ENCODE measurements at regions of chr1 and their contacts with region 1.

Region 1: DNA sequence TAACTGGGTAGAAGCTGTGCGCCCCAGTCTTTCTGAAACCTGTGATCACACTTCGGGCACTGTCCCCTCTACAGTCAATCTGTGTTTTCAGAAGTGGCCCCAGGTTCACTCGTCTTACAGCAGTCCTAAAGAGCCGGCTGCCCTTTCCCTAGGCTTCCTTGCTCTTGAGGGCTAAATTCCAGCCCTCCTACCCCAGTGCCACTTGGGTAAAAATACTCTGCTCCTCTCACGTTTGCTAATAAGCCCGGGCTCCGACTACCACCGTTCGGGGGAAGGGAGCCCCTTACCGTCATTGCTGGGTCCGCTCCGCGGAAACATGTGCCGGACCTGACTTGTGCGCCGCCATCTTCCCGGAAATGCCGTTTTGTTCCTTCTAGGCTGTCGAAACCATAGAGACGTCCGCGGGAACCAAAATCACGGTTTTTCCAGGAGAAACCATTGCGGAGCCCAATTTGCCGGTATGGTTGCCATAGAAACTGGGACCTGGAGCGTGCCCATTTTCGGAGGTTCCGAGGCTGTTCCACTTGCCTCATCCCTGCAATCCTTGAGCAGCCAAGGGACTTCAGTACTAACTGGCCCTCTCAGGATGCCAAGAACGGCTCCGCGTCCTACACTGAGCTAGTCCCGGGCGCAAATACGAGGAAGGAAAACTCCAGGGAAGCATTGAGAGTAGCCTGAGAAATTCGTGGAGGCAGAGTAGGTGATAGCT is at the start of gene GPATCH4:
- DNase-seq: peak; percentile 59 to 84
- ATAC-seq: peak; percentile 78 to 92 (median 87)
- H3K4me3 ChIP-seq: peak within 1 kb of the TSS; percentile 34 to 85 (median 70)
- H3K27ac ChIP-seq: peak within 1 kb of the TSS in 9 of 10 donors; percentile 57 to 84 (median 80)
- H3K4me1 ChIP-seq: peaks cover 7 to 25% (median 15%) of the 10 kb centered on the region in 9 donors
- H3K27me3 ChIP-seq: no peaks in the 10 kb centered on the region
- CTCF ChIP-seq: no peak
- total RNA-seq, gene GPATCH4: 9.3 to 25.4 (median 13.3) TPM

Region 2: GRCh38 chr1:156465747-156466365 is 135.4 kb before region 1 on chr1:
- intact Hi-C with region 1: loop called in 2 of 10 experiments (anchors 5 kb)
- DNase-seq: no peak
- ATAC-seq: peak in 6 of 8 donors; percentile 3 to 31 (median 8)
- H3K4me3 ChIP-seq: no peak overlapping the region
- H3K27ac ChIP-seq: peak overlapping the region; percentile 20 to 81 (median 59)
- H3K4me1 ChIP-seq: peaks cover 28 to 87% (median 56%) of the 10 kb centered on the region in 9 donors
- H3K27me3 ChIP-seq: no peaks in the 10 kb centered on the region
- CTCF ChIP-seq: peak in 4 of 9 donors; percentile 7 to 31 (median 19)

Region 3: GRCh38 chr1:156480411-156481192 is 120.7 kb before region 1 on chr1:
- intact Hi-C with region 1: loop called in 2 of 10 experiments (anchors 10 kb)
- DNase-seq: peak; percentile 65 to 71
- ATAC-seq: peak; percentile 7 to 60 (median 37)
- H3K4me3 ChIP-seq: no peak overlapping the region
- H3K27ac ChIP-seq: peak overlapping the region in 9 of 10 donors; percentile 27 to 92 (median 73)
- H3K4me1 ChIP-seq: peaks cover 48 to 100% (median 94%) of the 10 kb centered on the region in 9 donors
- H3K27me3 ChIP-seq: no peaks in the 10 kb centered on the region
- CTCF ChIP-seq: peak; percentile 23 to 84 (median 67)

Region 4: DNA sequence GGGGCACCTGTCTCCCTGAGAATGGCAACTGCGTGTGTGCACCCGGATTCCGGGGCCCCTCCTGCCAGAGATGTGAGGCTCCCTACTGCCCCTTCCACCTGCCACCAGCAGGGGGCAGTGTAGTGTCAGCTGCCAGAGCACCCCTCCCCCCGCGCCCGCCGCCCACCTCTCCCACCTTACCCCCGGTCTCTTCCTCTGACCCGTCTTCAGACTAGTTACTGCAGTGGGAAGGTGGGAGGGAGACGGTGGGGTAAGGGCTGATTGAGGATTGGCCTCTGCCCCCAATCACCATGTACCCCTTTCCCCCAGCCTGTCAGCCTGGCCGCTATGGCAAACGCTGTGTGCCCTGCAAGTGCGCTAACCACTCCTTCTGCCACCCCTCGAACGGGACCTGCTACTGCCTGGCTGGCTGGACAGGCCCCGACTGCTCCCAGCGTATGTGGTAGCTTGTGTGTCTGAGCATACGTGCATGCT is 309.1 kb after region 1 on chr1:
- intact Hi-C with region 1: no loop called
- DNase-seq: peak in 1 of 2 donors; percentile 48
- ATAC-seq: peak in 3 of 8 donors; percentile 35 to 54 (median 39)
- H3K4me3 ChIP-seq: no peak overlapping the region
- H3K27ac ChIP-seq: no peak overlapping the region
- H3K4me1 ChIP-seq: peaks cover 0 to 45% (median 29%) of the 10 kb centered on the region in 9 donors
- H3K27me3 ChIP-seq: peaks cover 0 to 21% (median 0%) of the 10 kb centered on the region in 7 donors
- CTCF ChIP-seq: peak; percentile 69 to 90 (median 79)